Mammary epithelial cell (primary cell): ENCODE measurements at regions of chrX and their contacts with region 1.

Region 1: GRCh38 chrX:3119376-3119775 is 78.1 kb downstream of the ARSF start:
- DNase-seq: no peak
- H3K4me3 ChIP-seq: no peak overlapping the region
- H3K27ac ChIP-seq: no peak overlapping the region
- H3K4me1 ChIP-seq: no peaks in the 10 kb centered on the region
- H3K27me3 ChIP-seq: no peaks in the 10 kb centered on the region
- CTCF ChIP-seq: no peak

Region 2: DNA sequence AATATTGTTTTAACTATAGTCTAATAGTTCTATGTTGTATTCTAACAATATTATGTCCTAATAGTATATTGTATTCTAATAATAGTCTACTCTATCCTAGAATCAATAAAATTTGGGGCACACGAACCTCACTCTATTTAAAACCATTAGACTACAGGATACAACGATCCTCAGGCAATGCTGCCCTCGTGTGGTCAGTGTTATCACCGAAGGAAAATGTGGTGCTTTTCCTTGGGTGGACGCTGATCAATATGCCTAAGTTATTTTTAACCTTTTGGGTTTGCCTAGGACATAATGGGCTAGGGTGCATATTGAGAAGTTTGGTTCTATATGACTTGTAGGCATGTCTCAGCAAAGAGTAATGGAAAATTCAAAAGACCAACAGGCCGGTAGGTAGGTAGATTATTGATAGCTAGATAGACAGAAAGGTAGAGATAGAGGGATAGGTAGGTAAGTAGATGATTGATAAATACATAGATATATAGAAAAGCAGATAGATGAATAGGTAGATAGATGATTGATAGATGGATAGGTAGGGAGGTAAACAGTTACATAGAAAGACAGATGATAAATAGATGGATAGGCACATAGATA is 519.0 kb after region 1 on chrX:
- CTCF ChIA-PET with region 1: no interaction called
- dilution Hi-C with region 1: no loop called
- in situ Hi-C with region 1: no loop called
- intact Hi-C with region 1: loop called (anchors 2 kb)
- DNase-seq: peak; percentile 20
- H3K4me3 ChIP-seq: no peak overlapping the region
- H3K27ac ChIP-seq: no peak overlapping the region
- H3K4me1 ChIP-seq: no peaks in the 10 kb centered on the region
- H3K27me3 ChIP-seq: no peaks in the 10 kb centered on the region
- CTCF ChIP-seq: peak; percentile 53 to 59